ENCODE measurements at regions of chr2 and their contacts with region 1.

Region 1: GRCh38 chr2:64914735-64915509 is 74.3 kb upstream of the SLC1A4 start:
- DNase-seq: no peak
- H3K4me3 ChIP-seq: no peak overlapping the region
- H3K27ac ChIP-seq: no peak overlapping the region
- H3K4me1 ChIP-seq: peaks cover 2% of the 10 kb centered on the region
- H3K27me3 ChIP-seq: peaks cover 2 to 4% of the 10 kb centered on the region in 2 experiments
- CTCF ChIP-seq: no peak
- POLR2A ChIP-seq: no peak

Region 2: GRCh38 chr2:64904413-64905329 is 10.3 kb before region 1 on chr2:
- CTCF ChIA-PET with region 1: interaction called, 24 read pairs
- POLR2A ChIA-PET with region 1: no interaction called
- dilution Hi-C with region 1: no loop called
- intact Hi-C with region 1: no loop called
- DNase-seq: peak; percentile 46
- H3K4me3 ChIP-seq: no peak overlapping the region
- H3K27ac ChIP-seq: no peak overlapping the region
- H3K4me1 ChIP-seq: no peaks in the 10 kb centered on the region
- H3K27me3 ChIP-seq: peaks cover 17 to 29% of the 10 kb centered on the region in 2 experiments
- CTCF ChIP-seq: no peak
- POLR2A ChIP-seq: no peak

Region 3: DNA sequence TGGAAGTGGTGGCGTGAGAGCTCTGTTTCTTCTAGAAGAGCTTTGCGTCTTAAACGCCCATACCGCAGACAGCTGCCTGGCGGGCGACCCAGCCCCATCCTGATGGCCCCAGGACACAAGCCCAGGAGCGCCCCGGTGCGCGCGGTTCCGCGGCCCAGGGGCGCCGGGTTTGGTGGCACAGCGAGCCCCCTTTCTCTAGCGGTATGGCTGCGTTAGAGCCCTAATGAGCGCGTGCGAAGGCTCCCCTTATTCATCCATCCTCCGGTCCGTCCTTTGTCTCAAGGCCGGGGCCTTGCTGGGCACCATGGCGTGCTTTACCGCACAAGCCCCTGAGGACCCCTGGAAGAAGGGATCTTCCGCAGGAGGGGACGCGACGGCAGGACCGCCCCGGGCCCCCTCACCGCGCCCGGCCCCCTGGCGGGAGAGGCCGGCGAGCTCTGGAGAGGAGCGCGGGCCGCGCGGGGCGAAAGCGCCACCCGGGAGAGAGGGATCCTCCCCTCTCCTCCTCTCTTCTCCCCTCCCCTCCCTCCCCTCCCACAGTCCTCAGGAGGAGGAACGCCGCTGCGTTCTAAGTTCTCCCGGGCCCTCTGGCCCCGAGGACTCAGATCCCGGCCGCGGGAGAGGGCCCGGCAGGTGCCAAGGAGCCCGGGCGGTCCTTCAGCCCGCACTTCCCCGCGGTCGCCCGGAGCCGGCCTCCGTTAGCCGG is 73.7 kb after region 1 on chr2:
- CTCF ChIA-PET with region 1: interaction called, 13 read pairs
- POLR2A ChIA-PET with region 1: no interaction called
- dilution Hi-C with region 1: no loop called
- intact Hi-C with region 1: loop called (anchors 1 kb)
- DNase-seq: peak; percentile 79
- H3K4me3 ChIP-seq: peak overlapping the region; percentile 54 to 69 (median 67)
- H3K27ac ChIP-seq: peak overlapping the region; percentile 94
- H3K4me1 ChIP-seq: peaks cover 15% of the 10 kb centered on the region
- H3K27me3 ChIP-seq: peaks cover 0 to 4% of the 10 kb centered on the region in 2 experiments
- CTCF ChIP-seq: peak in 1 of 2 donors; percentile 51
- POLR2A ChIP-seq: peak; percentile 73

Region 4: DNA sequence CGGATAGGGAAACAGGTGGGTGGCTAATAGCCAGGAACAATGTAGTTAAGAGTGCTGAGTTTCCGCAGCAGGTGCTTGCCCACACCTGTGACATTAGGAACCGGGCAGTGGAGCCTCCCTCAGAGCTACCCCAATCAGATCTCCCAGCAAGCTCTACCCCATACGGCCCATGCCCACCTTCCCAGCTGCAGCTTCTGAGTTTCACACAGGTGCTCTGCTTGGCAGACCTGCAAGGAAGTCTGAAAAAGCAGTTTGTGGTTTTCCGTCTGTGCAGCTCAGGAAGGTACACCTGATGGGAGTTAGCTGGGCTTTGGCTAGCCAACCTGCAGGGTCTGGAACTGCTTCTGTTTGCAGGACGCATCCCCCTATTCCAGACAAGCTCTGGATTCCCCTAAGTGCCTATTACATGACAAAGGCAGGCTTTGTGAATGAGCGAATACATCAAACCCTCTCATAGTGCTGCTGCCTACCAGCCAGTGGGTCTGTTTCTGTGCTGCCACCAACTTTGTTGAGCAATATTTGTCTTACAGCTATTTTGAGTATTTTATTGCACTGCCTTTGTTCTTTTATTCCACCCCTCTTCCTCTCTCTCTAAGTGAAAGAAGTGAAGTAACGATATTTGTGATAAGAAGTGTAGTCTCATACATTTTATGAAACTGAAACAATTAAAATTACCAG is 116.6 kb after region 1 on chr2:
- CTCF ChIA-PET with region 1: interaction called, 44 read pairs
- POLR2A ChIA-PET with region 1: no interaction called
- dilution Hi-C with region 1: no loop called
- intact Hi-C with region 1: loop called (anchors 1 kb)
- DNase-seq: peak; percentile 71
- H3K4me3 ChIP-seq: no peak overlapping the region
- H3K27ac ChIP-seq: no peak overlapping the region
- H3K4me1 ChIP-seq: peaks cover 10% of the 10 kb centered on the region
- H3K27me3 ChIP-seq: no peaks in the 10 kb centered on the region
- CTCF ChIP-seq: no peak
- POLR2A ChIP-seq: no peak

Region 5: GRCh38 chr2:65040400-65041261 is 125.7 kb after region 1 on chr2:
- CTCF ChIA-PET with region 1: interaction called, 55 read pairs
- POLR2A ChIA-PET with region 1: no interaction called
- dilution Hi-C with region 1: no loop called
- intact Hi-C with region 1: loop called (anchors 1 kb)
- DNase-seq: peak; percentile 83
- H3K4me3 ChIP-seq: no peak overlapping the region
- H3K27ac ChIP-seq: no peak overlapping the region
- H3K4me1 ChIP-seq: peaks cover 11% of the 10 kb centered on the region
- H3K27me3 ChIP-seq: no peaks in the 10 kb centered on the region
- CTCF ChIP-seq: peak; percentile 82 to 91
- POLR2A ChIP-seq: no peak

Region 6: DNA sequence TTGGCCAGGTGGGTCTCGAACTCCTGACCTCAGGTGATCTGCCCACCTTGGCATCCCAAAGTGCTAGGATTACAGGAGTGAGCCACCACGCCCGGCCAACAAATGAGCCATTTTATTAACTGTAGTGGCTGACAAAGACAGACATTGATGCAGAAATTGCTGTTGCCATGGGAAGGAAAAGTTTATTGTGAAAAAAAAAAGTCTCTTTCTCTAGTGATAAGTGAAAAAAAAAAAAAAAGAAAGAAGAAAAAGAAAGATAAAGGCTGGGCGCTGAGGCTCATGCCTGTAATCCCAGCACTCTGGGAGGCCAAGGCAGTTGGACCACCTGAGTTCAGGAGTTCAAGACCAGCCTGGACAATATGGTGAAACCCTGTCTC is 254.8 kb after region 1 on chr2:
- CTCF ChIA-PET with region 1: interaction called, 97 read pairs
- POLR2A ChIA-PET with region 1: no interaction called
- dilution Hi-C with region 1: no loop called
- intact Hi-C with region 1: loop called (anchors 1 kb)
- DNase-seq: no peak
- H3K4me3 ChIP-seq: no peak overlapping the region
- H3K27ac ChIP-seq: no peak overlapping the region
- H3K4me1 ChIP-seq: no peaks in the 10 kb centered on the region
- H3K27me3 ChIP-seq: peaks cover 0 to 4% of the 10 kb centered on the region in 2 experiments
- CTCF ChIP-seq: no peak
- POLR2A ChIP-seq: no peak

Region 7: GRCh38 chr2:66553370-66553769 is 1638.4 kb after region 1 on chr2:
- CTCF ChIA-PET with region 1: no interaction called
- POLR2A ChIA-PET with region 1: no interaction called
- dilution Hi-C with region 1: no loop called
- intact Hi-C with region 1: no loop called
- DNase-seq: peak; percentile 27
- H3K4me3 ChIP-seq: no peak overlapping the region
- H3K27ac ChIP-seq: no peak overlapping the region
- H3K4me1 ChIP-seq: peaks cover 19% of the 10 kb centered on the region
- H3K27me3 ChIP-seq: no peaks in the 10 kb centered on the region
- CTCF ChIP-seq: no peak
- POLR2A ChIP-seq: no peak

Measured in endothelial cell of umbilical vein (primary cell).